ENCODE measurements at regions of chr11 and their contacts with region 1.

Region 1: GRCh38 chr11:119144825-119145486 is 3.9 kb upstream of the ABCG4 start:
- DNase-seq: peak; percentile 81 to 90
- ATAC-seq: peak; percentile 90 to 93
- H3K4me3 ChIP-seq: no peak overlapping the region
- H3K27ac ChIP-seq: peak overlapping the region; percentile 45 to 60; a peak in 2 of 6 replicates
- H3K4me1 ChIP-seq: 0 out of 3 replicates have a peak, but pooled peaks cover 4% of the 10 kb centered on the region
- CTCF ChIP-seq: peak; percentile 44
- EP300 ChIP-seq: no peak
- POLR2A ChIP-seq: no peak
- RAD21 ChIP-seq: peak; percentile 37 to 41; a peak in 3 of 5 replicates

Region 2: DNA sequence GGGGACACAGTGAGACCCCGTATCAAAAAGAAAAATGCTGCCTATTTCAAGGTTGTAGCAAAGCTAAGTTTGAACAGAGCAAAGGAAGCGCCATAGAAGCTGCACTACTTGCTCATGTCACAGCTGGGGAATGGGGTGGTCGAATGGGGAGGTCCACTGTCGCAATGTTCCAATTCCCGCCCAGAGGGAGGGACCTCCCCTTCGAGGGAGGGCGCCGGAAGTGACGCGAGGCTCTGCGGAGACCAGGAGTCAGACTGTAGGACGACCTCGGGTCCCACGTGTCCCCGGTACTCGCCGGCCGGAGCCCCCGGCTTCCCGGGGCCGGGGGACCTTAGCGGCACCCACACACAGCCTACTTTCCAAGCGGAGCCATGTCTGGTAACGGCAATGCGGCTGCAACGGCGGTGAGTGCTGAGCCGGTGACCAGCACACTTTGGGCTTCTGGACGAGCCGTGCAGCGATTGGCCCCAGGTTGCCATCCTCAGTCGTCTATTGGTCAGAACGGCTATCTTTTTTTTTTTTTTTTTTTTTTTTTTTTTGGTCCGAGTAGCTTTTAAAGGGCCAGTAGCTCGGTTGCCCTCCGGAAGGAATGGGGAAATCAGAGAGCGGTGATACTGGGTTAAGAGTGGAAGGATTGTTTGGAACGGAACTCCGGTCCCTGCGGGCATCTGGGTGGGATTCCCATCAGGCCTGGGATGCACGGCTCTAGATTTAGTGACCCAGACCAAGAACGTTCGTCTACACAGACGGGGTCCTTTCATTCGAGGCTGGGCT is 60.1 kb before region 1 on chr11 and contains the start of gene HMBS:
- CTCF ChIA-PET with region 1: no interaction called
- POLR2A ChIA-PET with region 1: no interaction called
- DNase-seq: peak; percentile 78 to 92
- ATAC-seq: peak; percentile 93 to 96
- H3K4me3 ChIP-seq: peak within 1 kb of the TSS; percentile 81
- H3K27ac ChIP-seq: peak within 1 kb of the TSS; percentile 88 to 96
- H3K4me1 ChIP-seq: peaks cover 22% of the 10 kb centered on the region
- CTCF ChIP-seq: no peak
- EP300 ChIP-seq: no peak
- POLR2A ChIP-seq: peak; percentile 75
- RAD21 ChIP-seq: no peak
- polyA plus RNA-seq, gene HMBS: 62.2 and 77.6 TPM in 2 replicates

Region 3: GRCh38 chr11:119134389-119134978 is 10.5 kb before region 1 on chr11:
- CTCF ChIA-PET with region 1: interaction called, 13 read pairs
- POLR2A ChIA-PET with region 1: no interaction called
- DNase-seq: peak; percentile 21 to 47
- ATAC-seq: peak; percentile 87 to 92
- H3K4me3 ChIP-seq: no peak overlapping the region
- H3K27ac ChIP-seq: no peak overlapping the region
- H3K4me1 ChIP-seq: no peaks in the 10 kb centered on the region
- CTCF ChIP-seq: peak; percentile 30
- EP300 ChIP-seq: no peak
- POLR2A ChIP-seq: no peak
- RAD21 ChIP-seq: peak in 1 of 2 experiments; percentile 18; a peak in 1 of 5 replicates

Region 4: GRCh38 chr11:119155733-119156492 is 11.0 kb after region 1 on chr11:
- CTCF ChIA-PET with region 1: interaction called, 11 read pairs
- POLR2A ChIA-PET with region 1: no interaction called
- DNase-seq: peak; percentile 55 to 57
- ATAC-seq: peak; percentile 75 to 94
- H3K4me3 ChIP-seq: no peak overlapping the region
- H3K27ac ChIP-seq: no peak overlapping the region
- H3K4me1 ChIP-seq: 0 out of 3 replicates have a peak, but pooled peaks cover 2% of the 10 kb centered on the region
- CTCF ChIP-seq: no peak
- EP300 ChIP-seq: no peak
- POLR2A ChIP-seq: no peak
- RAD21 ChIP-seq: no peak

Region 5: GRCh38 chr11:119168471-119169281 is 23.7 kb after region 1 on chr11 and contains the start of gene NLRX1:
- CTCF ChIA-PET with region 1: interaction called, 10 read pairs
- POLR2A ChIA-PET with region 1: interaction called, 10 read pairs
- DNase-seq: peak; percentile 86 to 87
- ATAC-seq: peak; percentile 92
- H3K4me3 ChIP-seq: peak within 1 kb of the TSS; percentile 75
- H3K27ac ChIP-seq: peak within 1 kb of the TSS; percentile 95 to 99
- H3K4me1 ChIP-seq: peaks cover 16% of the 10 kb centered on the region
- CTCF ChIP-seq: peak; percentile 73
- EP300 ChIP-seq: no peak
- POLR2A ChIP-seq: peak; percentile 84
- RAD21 ChIP-seq: peak; percentile 15 to 30; a peak in 1 of 5 replicates
- polyA plus RNA-seq, gene NLRX1: 8.4 and 10.4 TPM in 2 replicates